CD4-positive, alpha-beta memory T cell (primary cell): ENCODE measurements at regions of chr3 and their contacts with region 1.

Region 1: GRCh38 chr3:150870396-150870795 is 34.8 kb downstream of the MINDY4B start:
- DNase-seq: no peak
- H3K4me3 ChIP-seq: no peak overlapping the region
- H3K4me3 Mint-ChIP-seq: no peak overlapping the region
- H3K27ac ChIP-seq: no peak overlapping the region
- H3K27ac Mint-ChIP-seq: no peak overlapping the region
- H3K4me1 ChIP-seq: peaks cover 2% of the 10 kb centered on the region
- H3K4me1 Mint-ChIP-seq: peaks cover under 1 to 3% (median 1%) of the 10 kb centered on the region in 4 donors
- H3K27me3 ChIP-seq: no peaks in the 10 kb centered on the region
- H3K27me3 Mint-ChIP-seq: peaks cover 5 to 9% of the 10 kb centered on the region in 2 donors

Region 2: DNA sequence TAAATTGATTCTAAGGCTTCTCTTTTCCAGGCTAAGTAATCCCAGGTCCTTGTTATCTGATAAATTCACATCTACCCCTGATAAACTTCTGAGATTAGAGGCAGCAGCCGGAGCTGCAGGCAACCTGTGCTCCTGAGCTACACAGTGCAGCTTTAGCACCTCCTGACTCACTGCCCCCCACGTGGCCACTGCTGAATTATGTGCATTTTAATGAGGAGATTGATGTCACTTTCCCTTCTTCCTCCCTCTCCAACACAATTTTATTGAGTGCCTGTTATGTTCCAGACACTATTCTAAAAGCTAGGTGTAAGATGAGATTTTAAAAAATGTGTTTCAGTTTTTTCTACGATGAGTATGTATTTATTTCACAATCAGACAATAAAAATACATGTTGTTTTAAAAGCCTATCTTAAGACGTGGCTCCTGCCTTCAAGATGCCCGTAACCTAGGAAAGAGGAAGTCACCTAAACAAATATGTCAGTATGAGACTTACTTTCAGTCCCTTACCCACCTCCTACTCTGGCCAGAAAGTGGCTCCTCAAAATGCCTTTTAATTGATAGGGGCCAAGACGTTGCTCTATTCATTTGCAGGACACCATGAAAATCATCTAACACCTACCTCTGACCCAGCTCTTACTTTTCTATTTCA is 738.2 kb before region 1 on chr3:
- CTCF ChIA-PET with region 1: no interaction called
- POLR2A ChIA-PET with region 1: no interaction called
- intact Hi-C with region 1: no loop called
- DNase-seq: no peak
- H3K4me3 ChIP-seq: no peak overlapping the region
- H3K4me3 Mint-ChIP-seq: no peak overlapping the region
- H3K27ac ChIP-seq: no peak overlapping the region
- H3K27ac Mint-ChIP-seq: no peak overlapping the region
- H3K4me1 ChIP-seq: no peaks in the 10 kb centered on the region
- H3K4me1 Mint-ChIP-seq: no peaks in the 10 kb centered on the region
- H3K27me3 ChIP-seq: no peaks in the 10 kb centered on the region
- H3K27me3 Mint-ChIP-seq: peaks cover 2 to 15% of the 10 kb centered on the region in 2 donors

Region 3: DNA sequence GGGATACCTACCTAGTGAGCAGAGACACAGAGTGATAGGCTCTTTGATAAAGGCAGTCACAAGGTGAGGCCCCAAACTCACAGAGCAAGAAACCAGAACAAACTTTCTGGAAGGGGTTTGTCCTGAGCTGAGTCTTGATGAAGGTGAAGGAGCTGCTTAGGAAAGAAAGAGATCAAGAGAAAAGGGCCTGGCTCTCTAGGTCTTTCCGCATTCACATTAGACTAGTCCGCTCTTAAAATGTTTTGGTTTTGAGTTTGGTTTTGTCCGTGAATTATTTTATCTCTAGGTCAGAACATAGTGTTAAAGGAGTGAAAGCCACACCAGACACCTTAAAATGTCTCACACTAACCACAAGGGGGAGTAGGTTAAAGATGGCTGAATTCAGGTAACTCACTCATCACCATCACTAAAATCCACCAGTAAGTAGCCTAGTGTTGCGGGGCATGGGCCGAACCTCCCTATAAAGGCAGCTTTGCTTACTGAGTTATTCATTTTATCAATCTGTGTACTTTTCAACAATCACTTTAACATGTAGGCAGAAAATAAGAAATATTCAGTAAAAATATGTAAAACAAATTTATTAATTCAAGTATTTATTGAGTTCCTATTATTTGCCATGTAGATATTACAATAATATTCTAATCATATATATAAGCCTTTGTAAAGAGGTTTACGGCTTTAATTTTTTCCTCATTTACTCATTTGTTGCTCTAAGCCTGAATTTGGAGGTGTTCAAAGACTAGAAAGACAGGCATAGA is 583.8 kb before region 1 on chr3:
- CTCF ChIA-PET with region 1: no interaction called
- POLR2A ChIA-PET with region 1: no interaction called
- intact Hi-C with region 1: loop called (anchors 1 kb)
- DNase-seq: peak; percentile 45 to 50 (median 48)
- H3K4me3 ChIP-seq: no peak overlapping the region
- H3K4me3 Mint-ChIP-seq: no peak overlapping the region
- H3K27ac ChIP-seq: no peak overlapping the region
- H3K27ac Mint-ChIP-seq: no peak overlapping the region
- H3K4me1 ChIP-seq: no peaks in the 10 kb centered on the region
- H3K4me1 Mint-ChIP-seq: peaks cover 0 to 1% (median 0%) of the 10 kb centered on the region in 4 donors
- H3K27me3 ChIP-seq: peaks cover 5% of the 10 kb centered on the region
- H3K27me3 Mint-ChIP-seq: peaks cover 8 to 20% of the 10 kb centered on the region in 2 donors

Region 4: DNA sequence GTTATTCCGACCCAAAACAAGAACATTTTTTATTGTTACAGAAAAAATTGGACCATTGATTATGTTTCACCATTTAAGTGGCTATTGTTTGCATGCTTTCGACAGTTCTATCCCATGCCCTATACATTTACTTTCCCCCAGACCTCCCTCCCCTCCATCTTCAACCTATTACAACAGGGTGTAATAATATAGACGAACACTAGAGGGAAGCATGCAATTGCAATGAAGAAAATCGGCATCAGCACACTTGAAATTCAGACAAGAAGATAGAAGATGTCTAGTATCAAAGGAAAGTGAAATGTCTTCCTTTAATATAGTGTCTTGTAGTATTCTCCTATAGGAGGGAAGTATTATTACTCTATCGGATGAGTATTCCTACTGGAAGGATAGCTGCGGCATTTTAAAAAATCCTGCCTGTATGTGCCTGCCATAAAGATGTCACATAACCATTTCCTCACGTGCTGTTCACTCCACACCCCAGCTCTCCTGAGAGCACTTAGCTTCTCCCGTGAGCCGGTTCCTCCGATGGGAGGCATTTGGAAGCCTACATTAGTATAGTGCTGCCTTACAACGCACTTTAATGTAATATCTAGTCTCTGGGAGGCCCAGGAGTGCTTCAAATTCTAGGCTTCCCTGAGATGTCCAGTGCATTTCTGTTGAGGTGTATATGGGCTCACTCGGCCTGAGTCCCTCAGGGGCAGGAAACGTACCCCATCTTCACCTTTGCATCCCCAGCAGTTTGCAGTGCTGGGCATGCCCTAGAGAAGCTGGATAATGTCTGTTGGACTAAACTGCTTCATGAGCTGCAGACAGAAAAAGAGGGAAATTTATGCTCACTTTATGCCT is 148.9 kb before region 1 on chr3:
- CTCF ChIA-PET with region 1: interaction called, 54 read pairs
- POLR2A ChIA-PET with region 1: no interaction called
- intact Hi-C with region 1: loop called (anchors 1 kb)
- DNase-seq: peak in 4 of 5 donors; percentile 67 to 75 (median 68)
- H3K4me3 ChIP-seq: no peak overlapping the region
- H3K4me3 Mint-ChIP-seq: peak overlapping the region in 1 of 8 donors; percentile 48
- H3K27ac ChIP-seq: no peak overlapping the region
- H3K27ac Mint-ChIP-seq: peak overlapping the region in 2 of 7 donors; percentile 11 to 53
- H3K4me1 ChIP-seq: peaks cover 12% of the 10 kb centered on the region
- H3K4me1 Mint-ChIP-seq: peaks cover 6 to 11% (median 8%) of the 10 kb centered on the region in 4 donors
- H3K27me3 ChIP-seq: no peaks in the 10 kb centered on the region
- H3K27me3 Mint-ChIP-seq: no peaks in the 10 kb centered on the region

Region 5: GRCh38 chr3:150887025-150887424 is 16.6 kb after region 1 on chr3:
- CTCF ChIA-PET with region 1: no interaction called
- POLR2A ChIA-PET with region 1: no interaction called
- intact Hi-C with region 1: no loop called
- DNase-seq: no peak
- H3K4me3 ChIP-seq: no peak overlapping the region
- H3K4me3 Mint-ChIP-seq: no peak overlapping the region
- H3K27ac ChIP-seq: no peak overlapping the region
- H3K27ac Mint-ChIP-seq: no peak overlapping the region
- H3K4me1 ChIP-seq: no peaks in the 10 kb centered on the region
- H3K4me1 Mint-ChIP-seq: no peaks in the 10 kb centered on the region
- H3K27me3 ChIP-seq: no peaks in the 10 kb centered on the region
- H3K27me3 Mint-ChIP-seq: peaks cover 18 to 21% of the 10 kb centered on the region in 2 donors